A549 (cell line): ENCODE measurements at regions of chr5 and their contacts with region 1.

Region 1: GRCh38 chr5:91383027-91383955 is at the start of gene ARRDC3:
- DNase-seq: peak; percentile 95 to 97
- ATAC-seq: peak; percentile 80 to 85
- H3K4me3 ChIP-seq: peak within 1 kb of the TSS; percentile 60
- H3K27ac ChIP-seq: peak within 1 kb of the TSS; percentile 91 to 96
- H3K4me1 ChIP-seq: peaks cover 6% of the 10 kb centered on the region; the same call in 2 of the 3 replicates
- CTCF ChIP-seq: no peak
- EP300 ChIP-seq: no peak; a peak in 1 of 5 replicates
- POLR2A ChIP-seq: peak; percentile 97
- RAD21 ChIP-seq: peak; percentile 3 to 27; a peak in 3 of 5 replicates
- polyA plus RNA-seq, gene ARRDC3: 32.4 and 36.3 TPM in 2 replicates

Region 2: DNA sequence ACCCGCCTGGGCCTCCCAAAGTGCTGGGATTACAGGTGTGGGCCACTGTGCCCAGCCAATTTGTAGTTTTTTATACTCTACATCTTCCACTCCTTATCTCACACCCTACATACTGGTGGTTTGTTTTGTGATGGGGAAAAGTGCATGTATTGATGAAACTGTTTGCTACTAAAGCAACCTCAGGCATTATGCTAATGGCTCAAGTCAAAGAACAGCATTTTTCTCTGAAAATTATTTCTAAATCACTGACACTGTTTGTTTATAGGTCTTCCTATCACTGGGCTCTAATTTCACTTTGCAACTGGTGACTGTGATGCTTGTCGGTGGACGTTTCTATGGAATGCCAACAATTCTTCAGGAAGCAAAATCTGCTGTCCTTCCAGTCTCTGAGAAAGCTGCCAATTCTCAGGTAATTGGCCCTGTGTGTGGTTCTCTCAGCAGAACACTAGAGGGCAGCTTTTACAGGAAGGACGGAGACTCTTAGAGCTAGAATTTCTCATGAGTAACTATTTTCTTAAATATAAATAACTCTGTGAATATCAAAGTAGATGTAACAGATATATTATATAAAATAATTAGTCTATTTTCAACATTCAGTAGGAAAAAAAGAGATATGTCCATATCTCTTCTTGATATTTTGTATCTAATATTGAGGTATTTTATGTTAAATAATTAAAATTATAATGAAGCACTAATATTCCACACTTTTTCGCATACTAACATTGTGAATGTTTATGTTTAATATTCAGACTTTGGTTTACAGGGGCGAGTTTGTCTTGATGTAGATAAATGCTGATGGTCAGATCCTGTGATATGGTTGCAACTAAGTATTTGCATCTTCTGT is 580.6 kb before region 1 on chr5:
- CTCF ChIA-PET with region 1: interaction called, 31 read pairs
- POLR2A ChIA-PET with region 1: interaction called, 5 read pairs
- DNase-seq: peak; percentile 37 to 60
- ATAC-seq: peak; percentile 79 to 92; a peak in 5 of 6 replicates
- H3K4me3 ChIP-seq: no peak overlapping the region
- H3K27ac ChIP-seq: no peak overlapping the region
- H3K4me1 ChIP-seq: no peaks in the 10 kb centered on the region
- CTCF ChIP-seq: peak; percentile 70
- EP300 ChIP-seq: no peak
- POLR2A ChIP-seq: no peak
- RAD21 ChIP-seq: peak; percentile 51 to 52; a peak in 4 of 5 replicates

Region 3: GRCh38 chr5:90932052-90932699 is 451.1 kb before region 1 on chr5:
- CTCF ChIA-PET with region 1: interaction called, 103 read pairs
- POLR2A ChIA-PET with region 1: interaction called, 32 read pairs
- DNase-seq: peak; percentile 47 to 80
- ATAC-seq: peak; percentile 77 to 93
- H3K4me3 ChIP-seq: no peak overlapping the region
- H3K27ac ChIP-seq: peak overlapping the region; percentile 72 to 82
- H3K4me1 ChIP-seq: peaks cover 33% of the 10 kb centered on the region
- CTCF ChIP-seq: peak; percentile 94
- EP300 ChIP-seq: no peak
- POLR2A ChIP-seq: no peak
- RAD21 ChIP-seq: peak; percentile 96 to 98

Region 4: DNA sequence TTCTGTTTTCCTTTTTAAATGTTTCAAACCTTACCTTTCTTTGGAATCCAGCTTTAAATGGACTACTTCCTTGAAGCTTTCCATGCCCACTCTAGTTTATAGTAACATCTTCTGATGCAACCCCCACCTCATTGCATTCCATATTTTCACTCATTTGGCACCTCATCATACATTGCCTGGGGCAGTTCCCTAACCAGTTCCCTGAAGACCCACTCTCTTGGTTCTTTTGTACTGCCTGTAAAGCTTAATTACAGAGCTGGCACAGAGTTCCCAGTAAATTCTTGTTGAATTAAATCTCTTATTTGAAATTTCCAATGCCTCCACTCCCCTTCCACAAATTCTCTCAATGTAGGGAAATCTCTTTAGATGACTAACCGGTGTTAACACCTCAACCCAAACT is 257.4 kb before region 1 on chr5:
- CTCF ChIA-PET with region 1: interaction called, 10 read pairs
- POLR2A ChIA-PET with region 1: interaction called, 5 read pairs
- DNase-seq: no peak
- ATAC-seq: no peak; a peak in 1 of 6 replicates
- H3K4me3 ChIP-seq: no peak overlapping the region
- H3K27ac ChIP-seq: peak overlapping the region; percentile 31 to 41; a peak in 5 of 6 replicates
- H3K4me1 ChIP-seq: peaks cover 39% of the 10 kb centered on the region
- CTCF ChIP-seq: no peak
- EP300 ChIP-seq: no peak
- POLR2A ChIP-seq: no peak
- RAD21 ChIP-seq: no peak

Region 5: GRCh38 chr5:91280362-91281269 is 102.7 kb before region 1 on chr5:
- CTCF ChIA-PET with region 1: interaction called, 24 read pairs
- POLR2A ChIA-PET with region 1: interaction called, 67 read pairs
- DNase-seq: peak; percentile 95 to 97
- ATAC-seq: peak; percentile 95
- H3K4me3 ChIP-seq: peak overlapping the region; percentile 50
- H3K27ac ChIP-seq: peak overlapping the region; percentile 94
- H3K4me1 ChIP-seq: peaks cover 49% of the 10 kb centered on the region
- CTCF ChIP-seq: no peak
- EP300 ChIP-seq: peak; percentile 61 to 85; a peak in 4 of 5 replicates
- POLR2A ChIP-seq: peak; percentile 37; the same call in 1 of the 2 replicates
- RAD21 ChIP-seq: peak; percentile 3 to 45; a peak in 2 of 5 replicates

Region 6: GRCh38 chr5:91373016-91373415 is 10.3 kb before region 1 on chr5:
- CTCF ChIA-PET with region 1: interaction called, 7 read pairs
- POLR2A ChIA-PET with region 1: interaction called, 14 read pairs
- DNase-seq: no peak
- ATAC-seq: no peak
- H3K4me3 ChIP-seq: no peak overlapping the region
- H3K27ac ChIP-seq: no peak overlapping the region
- H3K4me1 ChIP-seq: peaks cover 42% of the 10 kb centered on the region; the same call in 2 of the 3 replicates
- CTCF ChIP-seq: no peak
- EP300 ChIP-seq: no peak
- POLR2A ChIP-seq: no peak
- RAD21 ChIP-seq: no peak

Region 7: GRCh38 chr5:91641730-91642350 is 258.5 kb after region 1 on chr5:
- CTCF ChIA-PET with region 1: no interaction called
- POLR2A ChIA-PET with region 1: no interaction called
- DNase-seq: peak; percentile 4 to 42
- ATAC-seq: peak in 1 of 2 experiments; percentile 55; a peak in 1 of 6 replicates
- H3K4me3 ChIP-seq: no peak overlapping the region
- H3K27ac ChIP-seq: no peak overlapping the region
- H3K4me1 ChIP-seq: no peaks in the 10 kb centered on the region
- CTCF ChIP-seq: peak; percentile 78
- EP300 ChIP-seq: no peak
- POLR2A ChIP-seq: no peak
- RAD21 ChIP-seq: peak; percentile 69 to 86